ENCODE measurements at regions of chr6 and their contacts with region 1.

Region 1: GRCh38 chr6:26025894-26026832 is 61.1 kb upstream of the HFE start:
- DNase-seq: peak; percentile 93 to 97 (median 96)
- ATAC-seq: peak; percentile 72 to 75 (median 74)
- H3K4me3 ChIP-seq: peak overlapping the region; percentile 35 to 87 (median 68)
- H3K27ac ChIP-seq: peak overlapping the region; percentile 84 to 98 (median 94)
- H3K4me1 ChIP-seq: peaks cover 0 to 36% (median 19%) of the 10 kb centered on the region in 12 donors
- H3K27me3 ChIP-seq: no peaks in the 10 kb centered on the region
- CTCF ChIP-seq: peak; percentile 64 to 93 (median 84)
- POLR2A ChIP-seq: peak in 1 of 2 donors; percentile 44

Region 2: DNA sequence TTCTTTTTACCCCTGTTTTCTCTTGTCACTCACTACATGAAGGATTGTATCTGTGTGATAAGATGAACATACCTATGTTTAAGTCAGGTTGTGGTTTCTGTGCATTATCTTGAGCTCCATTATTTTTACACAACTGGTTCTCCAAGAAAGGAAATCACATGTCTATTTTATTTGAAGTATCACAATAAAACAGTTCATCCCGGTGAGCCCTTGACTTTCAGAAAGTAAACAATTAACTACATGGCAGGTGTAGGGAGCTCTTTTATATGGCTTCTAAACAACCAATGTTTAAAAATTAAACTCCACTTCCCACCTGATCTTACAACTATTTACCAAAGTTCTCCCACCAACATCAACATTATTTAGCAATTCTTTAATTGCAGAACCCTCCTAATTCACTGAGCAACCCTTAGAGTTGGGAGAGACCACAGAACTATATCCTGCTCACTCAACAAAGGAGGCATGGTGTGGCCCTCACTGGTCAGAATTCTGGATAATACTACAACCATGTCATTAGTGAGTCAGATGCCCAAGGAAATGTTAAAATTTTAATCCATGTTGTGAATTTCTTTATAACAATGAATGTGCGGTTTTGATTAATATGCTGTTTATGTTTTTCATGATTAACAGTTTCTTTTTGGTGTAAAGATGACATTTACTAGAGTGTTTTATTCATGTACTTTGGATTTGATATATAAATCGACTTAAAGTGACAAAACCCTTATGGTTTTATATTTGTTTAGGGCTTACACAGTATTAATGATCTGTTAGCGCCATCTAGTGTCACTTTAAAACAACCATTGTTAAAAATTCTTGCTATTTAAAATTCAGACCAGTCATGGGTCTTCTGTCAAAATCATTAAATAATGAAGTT is 424.1 kb before region 1 on chr6:
- intact Hi-C with region 1: no loop called
- DNase-seq: no peak
- ATAC-seq: peak in 1 of 4 donors; percentile 22
- H3K4me3 ChIP-seq: no peak overlapping the region
- H3K27ac ChIP-seq: no peak overlapping the region
- H3K4me1 ChIP-seq: no peaks in the 10 kb centered on the region
- H3K27me3 ChIP-seq: peaks cover 0 to 3% (median 0%) of the 10 kb centered on the region in 9 donors
- CTCF ChIP-seq: peak; percentile 43 to 71 (median 62)
- POLR2A ChIP-seq: no peak

Region 3: DNA sequence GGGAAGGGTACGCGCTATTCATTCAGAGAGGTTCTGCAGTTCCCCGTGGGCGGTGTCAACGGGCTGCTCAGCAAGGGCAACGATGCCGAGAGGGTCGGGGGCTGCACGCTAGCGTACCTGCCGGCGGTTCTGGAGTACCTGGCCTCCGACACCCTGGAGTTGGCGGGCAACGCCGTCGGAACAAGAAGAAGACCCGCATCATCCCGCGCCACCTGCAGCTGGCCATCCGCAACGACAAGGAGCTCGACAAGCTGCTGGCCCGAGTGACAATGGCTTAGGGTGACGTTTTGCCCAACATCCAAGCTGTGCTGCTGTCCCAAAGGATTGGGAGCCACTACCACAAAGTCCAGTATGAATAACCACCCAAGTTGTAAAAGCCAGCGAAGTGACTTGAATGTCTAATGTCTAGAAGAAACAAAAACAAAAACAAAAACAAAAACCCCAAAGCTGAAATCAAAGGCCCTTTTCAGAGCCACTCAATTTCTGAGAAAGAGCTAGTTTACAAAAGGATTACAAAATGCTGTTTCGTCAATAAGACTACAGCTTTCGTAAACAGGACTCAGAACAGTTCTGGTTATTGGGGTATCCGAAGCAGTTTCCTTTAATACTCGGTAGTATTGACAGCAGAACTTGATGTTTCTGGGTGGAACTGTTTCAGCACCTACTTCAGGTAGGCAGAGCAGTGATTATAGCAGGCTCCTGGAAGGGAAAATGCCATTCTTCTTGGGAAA is 293.5 kb before region 1 on chr6:
- intact Hi-C with region 1: no loop called
- DNase-seq: no peak
- ATAC-seq: no peak
- H3K4me3 ChIP-seq: no peak overlapping the region
- H3K27ac ChIP-seq: no peak overlapping the region
- H3K4me1 ChIP-seq: no peaks in the 10 kb centered on the region
- H3K27me3 ChIP-seq: peaks cover 0 to 38% (median 9%) of the 10 kb centered on the region in 9 donors
- CTCF ChIP-seq: no peak
- POLR2A ChIP-seq: no peak

Region 4: DNA sequence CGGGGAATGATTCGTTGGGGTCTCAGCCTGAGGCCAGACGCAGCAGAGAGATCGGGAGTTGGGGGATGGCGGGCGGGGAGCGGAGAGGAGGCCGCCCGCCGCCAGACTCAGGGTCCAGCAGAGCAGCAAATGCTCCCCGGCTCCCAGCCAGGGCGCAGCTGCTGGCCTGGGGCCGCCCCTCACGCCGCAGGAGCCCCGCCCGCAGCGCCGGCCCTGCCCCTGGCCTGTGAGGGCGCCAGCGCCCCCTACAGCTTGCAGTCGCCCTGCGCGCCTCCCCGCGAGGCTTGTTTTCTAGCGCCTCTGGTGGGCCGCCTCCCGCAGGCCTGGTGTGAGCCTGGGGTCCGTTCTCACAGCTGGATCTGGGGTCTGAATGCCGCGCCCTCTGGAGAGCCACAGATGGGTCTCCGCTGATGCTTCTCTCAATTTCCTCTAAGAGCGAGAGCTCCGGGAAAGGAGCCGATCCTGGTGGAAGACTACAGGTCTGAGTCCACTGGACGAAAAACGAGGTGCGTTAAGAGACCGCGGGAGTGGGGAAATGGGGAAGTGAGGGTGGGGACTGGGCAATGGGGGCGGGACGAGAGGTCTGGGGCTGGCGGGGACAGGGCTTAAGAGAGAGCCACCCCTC is 33.6 kb before region 1 on chr6:
- intact Hi-C with region 1: loop called in 1 of 10 experiments (anchors 2 kb)
- DNase-seq: peak; percentile 95 to 98 (median 96)
- ATAC-seq: peak; percentile 88 to 98 (median 98)
- H3K4me3 ChIP-seq: peak overlapping the region; percentile 38 to 83 (median 66)
- H3K27ac ChIP-seq: peak overlapping the region; percentile 80 to 95 (median 91)
- H3K4me1 ChIP-seq: peaks cover 0 to 23% (median 11%) of the 10 kb centered on the region in 12 donors
- H3K27me3 ChIP-seq: no peaks in the 10 kb centered on the region
- CTCF ChIP-seq: peak; percentile 97 to 100 (median 99)
- POLR2A ChIP-seq: peak in 1 of 2 donors; percentile 85

Region 5: GRCh38 chr6:26054857-26055669 is 28.9 kb after region 1 on chr6:
- intact Hi-C with region 1: loop called in 2 of 10 experiments (anchors 2 kb)
- DNase-seq: peak; percentile 80 to 92 (median 89)
- ATAC-seq: peak; percentile 79 to 89 (median 84)
- H3K4me3 ChIP-seq: peak overlapping the region; percentile 59 to 80 (median 74)
- H3K27ac ChIP-seq: peak overlapping the region; percentile 81 to 98 (median 95)
- H3K4me1 ChIP-seq: peaks cover 0 to 24% (median 10%) of the 10 kb centered on the region in 12 donors
- H3K27me3 ChIP-seq: no peaks in the 10 kb centered on the region
- CTCF ChIP-seq: peak in 2 of 12 donors; percentile 5 to 22
- POLR2A ChIP-seq: no peak

Region 6: DNA sequence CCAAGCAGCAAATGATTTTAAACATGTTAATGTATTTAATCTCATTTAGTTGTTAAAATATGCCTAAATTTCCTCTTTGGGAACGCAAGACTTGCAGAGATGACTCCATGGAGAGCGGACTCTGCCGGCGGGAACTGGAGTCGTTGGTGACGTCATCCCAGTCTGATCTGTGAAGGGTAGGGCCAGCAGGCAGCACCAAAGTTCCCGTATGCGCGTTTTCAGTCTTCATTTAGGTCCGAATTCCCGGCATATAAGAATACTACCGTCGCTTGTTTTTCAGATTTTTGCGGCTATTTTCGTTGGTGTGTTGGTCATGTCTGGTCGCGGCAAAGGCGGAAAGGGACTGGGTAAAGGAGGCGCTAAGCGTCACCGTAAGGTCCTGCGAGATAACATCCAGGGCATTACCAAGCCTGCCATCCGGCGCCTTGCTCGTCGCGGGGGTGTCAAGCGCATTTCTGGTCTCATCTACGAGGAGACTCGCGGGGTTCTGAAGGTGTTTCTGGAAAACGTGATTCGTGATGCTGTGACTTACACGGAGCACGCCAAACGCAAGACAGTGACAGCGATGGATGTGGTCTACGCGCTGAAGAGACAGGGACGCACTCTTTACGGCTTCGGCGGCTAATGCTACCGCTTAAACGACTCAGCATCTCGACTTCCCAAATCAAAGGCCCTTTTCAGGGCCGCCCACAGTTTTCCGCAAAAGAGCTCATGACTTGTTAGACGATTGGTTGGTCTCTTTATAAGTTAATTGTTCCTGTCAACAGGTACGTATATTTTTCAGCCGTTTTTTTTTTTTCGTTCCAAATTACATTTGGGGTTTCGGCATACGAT is 178.4 kb after region 1 on chr6:
- intact Hi-C with region 1: loop called in 6 of 10 experiments (anchors 5 to 10 kb)
- DNase-seq: peak; percentile 89 to 97 (median 95)
- ATAC-seq: peak; percentile 90 to 94 (median 92)
- H3K4me3 ChIP-seq: peak overlapping the region; percentile 56 to 83 (median 74)
- H3K27ac ChIP-seq: peak overlapping the region; percentile 83 to 98 (median 94)
- H3K4me1 ChIP-seq: peaks cover 0 to 43% (median 7%) of the 10 kb centered on the region in 12 donors
- H3K27me3 ChIP-seq: peaks cover 0 to 15% (median 0%) of the 10 kb centered on the region in 9 donors
- CTCF ChIP-seq: peak in 11 of 12 donors; percentile 19 to 71 (median 36)
- POLR2A ChIP-seq: peak in 1 of 2 donors; percentile 82

Region 7: DNA sequence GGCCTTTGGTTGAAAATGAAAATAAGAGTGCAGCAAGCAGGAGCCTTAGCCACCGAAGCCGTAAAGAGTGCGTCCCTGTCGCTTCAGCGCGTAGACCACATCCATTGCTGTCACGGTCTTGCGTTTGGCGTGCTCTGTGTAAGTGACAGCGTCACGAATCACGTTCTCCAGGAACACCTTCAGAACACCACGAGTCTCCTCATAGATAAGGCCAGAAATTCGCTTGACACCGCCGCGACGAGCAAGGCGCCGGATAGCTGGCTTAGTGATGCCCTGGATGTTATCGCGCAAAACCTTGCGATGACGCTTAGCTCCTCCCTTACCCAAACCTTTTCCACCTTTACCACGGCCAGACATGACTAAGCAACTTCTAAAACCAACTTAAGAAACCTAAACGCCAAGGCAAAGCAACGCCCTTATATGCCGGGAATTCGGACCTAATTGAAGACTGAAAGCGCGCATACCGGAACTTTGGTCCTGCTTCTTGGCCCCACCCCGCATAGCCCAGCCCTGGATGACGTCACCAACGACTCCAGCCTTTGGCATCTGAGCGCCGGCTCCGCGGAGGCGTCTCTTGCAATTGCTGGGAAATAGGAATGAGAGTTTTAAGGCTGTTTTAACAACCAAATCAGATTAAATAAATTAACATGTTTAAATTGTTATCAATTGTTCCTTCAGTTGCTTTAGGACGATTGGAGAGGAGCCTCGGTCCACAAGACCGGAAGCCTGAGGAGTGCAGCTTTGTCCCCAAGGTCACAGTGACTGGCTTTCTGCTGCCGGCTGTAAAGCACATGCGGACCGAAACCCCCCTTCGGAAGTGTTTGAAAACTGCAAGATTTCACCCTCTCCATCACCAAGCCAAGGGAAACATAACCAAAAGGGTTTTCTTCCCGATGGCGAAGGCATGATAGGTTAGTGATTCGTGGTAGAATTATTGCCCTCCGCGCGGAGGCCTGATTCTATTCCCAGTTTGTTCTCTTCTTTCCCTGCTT is 259.3 kb after region 1 on chr6:
- intact Hi-C with region 1: loop called in 1 of 10 experiments (anchors 10 kb)
- DNase-seq: peak; percentile 96 to 98 (median 98)
- ATAC-seq: peak; percentile 94 to 96 (median 94)
- H3K4me3 ChIP-seq: peak overlapping the region; percentile 55 to 91 (median 72)
- H3K27ac ChIP-seq: peak overlapping the region; percentile 88 to 98 (median 97)
- H3K4me1 ChIP-seq: peaks cover 0 to 28% (median 9%) of the 10 kb centered on the region in 12 donors
- H3K27me3 ChIP-seq: no peaks in the 10 kb centered on the region
- CTCF ChIP-seq: no peak
- POLR2A ChIP-seq: peak in 1 of 2 donors; percentile 78

Region 8: GRCh38 chr6:27132532-27133280 is 1106.5 kb after region 1 on chr6:
- intact Hi-C with region 1: loop called in 3 of 10 experiments (anchors 10 kb)
- DNase-seq: peak; percentile 81 to 89 (median 86)
- ATAC-seq: peak; percentile 94 to 98 (median 97)
- H3K4me3 ChIP-seq: peak overlapping the region; percentile 15 to 68 (median 60)
- H3K27ac ChIP-seq: peak overlapping the region; percentile 34 to 91 (median 80)
- H3K4me1 ChIP-seq: peaks cover 0 to 46% (median 8%) of the 10 kb centered on the region in 12 donors
- H3K27me3 ChIP-seq: no peaks in the 10 kb centered on the region
- CTCF ChIP-seq: no peak
- POLR2A ChIP-seq: peak; percentile 53 to 97

Region 9: GRCh38 chr6:27472617-27473400 is 1446.6 kb after region 1 on chr6 and contains the start of gene ZNF184:
- intact Hi-C with region 1: loop called in 1 of 10 experiments (anchors 10 kb)
- DNase-seq: peak; percentile 95 to 96 (median 96)
- ATAC-seq: peak; percentile 99 to 100 (median 100)
- H3K4me3 ChIP-seq: peak within 1 kb of the TSS; percentile 52 to 99 (median 86)
- H3K27ac ChIP-seq: peak within 1 kb of the TSS; percentile 34 to 92 (median 86)
- H3K4me1 ChIP-seq: peaks cover 0 to 37% (median 19%) of the 10 kb centered on the region in 12 donors
- H3K27me3 ChIP-seq: no peaks in the 10 kb centered on the region
- CTCF ChIP-seq: peak in 3 of 12 donors; percentile 2 to 29 (median 24)
- POLR2A ChIP-seq: peak in 1 of 2 donors; percentile 78
- total RNA-seq, gene ZNF184: 3.2 to 6.5 (median 4.0) TPM

Measured in heart left ventricle (tissue), 16 donors.